ENCODE measurements at regions of chr16 and their contacts with region 1.

Region 1: DNA sequence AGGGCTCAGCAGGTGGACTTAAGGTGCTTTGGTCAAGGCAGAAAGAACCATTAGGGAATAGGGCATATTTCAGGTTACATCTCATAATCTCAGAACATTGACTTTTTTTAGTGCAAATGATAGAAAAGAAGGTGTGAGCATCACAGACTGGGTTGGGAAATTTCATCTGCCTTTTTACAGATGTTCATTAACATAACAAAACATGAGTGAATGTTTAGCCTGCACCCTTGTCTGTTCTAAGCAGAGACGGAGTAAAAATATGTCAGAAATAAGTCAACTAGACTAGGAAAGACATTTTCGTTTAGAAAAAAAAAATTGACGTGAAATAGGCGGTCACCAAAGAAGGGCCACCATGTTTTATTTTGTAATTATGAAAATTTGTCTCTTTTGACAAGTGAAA is 127.5 kb upstream of the CDH13 start:
- DNase-seq: no peak
- ATAC-seq: no peak
- H3K4me3 ChIP-seq: no peak overlapping the region
- H3K27ac ChIP-seq: no peak overlapping the region
- H3K4me1 ChIP-seq: no peaks in the 10 kb centered on the region
- H3K27me3 ChIP-seq: no peaks in the 10 kb centered on the region
- CTCF ChIP-seq: no peak

Region 2: DNA sequence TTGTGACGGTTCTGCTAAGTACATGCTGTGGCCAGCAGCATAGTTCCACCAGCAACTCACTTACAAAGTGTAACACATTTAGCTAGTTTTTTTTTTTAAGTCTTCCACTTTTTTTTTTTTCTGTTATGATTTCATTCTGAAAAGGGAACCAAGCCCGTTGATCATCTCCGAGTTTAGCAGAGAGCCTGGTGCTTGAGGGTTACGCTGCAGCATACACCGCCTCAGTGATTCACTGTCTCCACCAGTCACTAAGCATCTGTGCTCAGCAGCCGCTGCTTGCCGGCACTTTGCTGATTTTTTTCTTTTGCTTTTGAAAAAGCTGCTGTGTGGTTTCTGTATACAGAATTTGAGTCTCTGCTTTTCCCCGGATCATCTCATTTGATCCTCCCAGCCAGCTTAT is 67.0 kb before region 1 on chr16:
- CTCF ChIA-PET with region 1: no interaction called
- POLR2A ChIA-PET with region 1: no interaction called
- in situ Hi-C with region 1: no loop called
- intact Hi-C with region 1: no loop called
- DNase-seq: no peak
- ATAC-seq: no peak
- H3K4me3 ChIP-seq: no peak overlapping the region
- H3K27ac ChIP-seq: no peak overlapping the region
- H3K4me1 ChIP-seq: no peaks in the 10 kb centered on the region
- H3K27me3 ChIP-seq: no peaks in the 10 kb centered on the region; the same call in 1 of the 2 replicates
- CTCF ChIP-seq: no peak

Region 3: GRCh38 chr16:82544378-82545160 is 45.3 kb after region 1 on chr16:
- CTCF ChIA-PET with region 1: no interaction called
- POLR2A ChIA-PET with region 1: no interaction called
- in situ Hi-C with region 1: no loop called
- intact Hi-C with region 1: loop called (anchors 2 kb)
- DNase-seq: no peak
- ATAC-seq: no peak
- H3K4me3 ChIP-seq: no peak overlapping the region
- H3K27ac ChIP-seq: no peak overlapping the region
- H3K4me1 ChIP-seq: no peaks in the 10 kb centered on the region
- H3K27me3 ChIP-seq: no peaks in the 10 kb centered on the region
- CTCF ChIP-seq: no peak